Activated T-helper 1 cell treated with anti-CD3 and anti-CD28 coated beads, Interleukin-12 subunit alpha, Interleukin-12 subunit beta, Interleukin-2, Interleukin-4 antibody, amounts not matched to agents 30 ng/mL and 10 ng/mL and 1 ng/mL, durations not matched to agents 14 hours and 24 hours and 36 hours (primary cell): ENCODE measurements at regions of chr4 and their contacts with region 1.

Region 1: GRCh38 chr4:74228691-74229640 is 71.0 kb downstream of the MTHFD2L start:
- DNase-seq: peak; percentile 47
- H3K4me3 Mint-ChIP-seq: no peak overlapping the region
- H3K27ac Mint-ChIP-seq: no peak overlapping the region
- H3K4me1 Mint-ChIP-seq: peaks cover 20% of the 10 kb centered on the region
- H3K27me3 Mint-ChIP-seq: peaks cover 4% of the 10 kb centered on the region

Region 2: GRCh38 chr4:74189331-74190043 is 39.5 kb before region 1 on chr4:
- intact Hi-C with region 1: loop called (anchors 2 kb)
- DNase-seq: no peak
- H3K4me3 Mint-ChIP-seq: no peak overlapping the region
- H3K27ac Mint-ChIP-seq: no peak overlapping the region
- H3K4me1 Mint-ChIP-seq: no peaks in the 10 kb centered on the region
- H3K27me3 Mint-ChIP-seq: peaks cover 2% of the 10 kb centered on the region

Region 3: DNA sequence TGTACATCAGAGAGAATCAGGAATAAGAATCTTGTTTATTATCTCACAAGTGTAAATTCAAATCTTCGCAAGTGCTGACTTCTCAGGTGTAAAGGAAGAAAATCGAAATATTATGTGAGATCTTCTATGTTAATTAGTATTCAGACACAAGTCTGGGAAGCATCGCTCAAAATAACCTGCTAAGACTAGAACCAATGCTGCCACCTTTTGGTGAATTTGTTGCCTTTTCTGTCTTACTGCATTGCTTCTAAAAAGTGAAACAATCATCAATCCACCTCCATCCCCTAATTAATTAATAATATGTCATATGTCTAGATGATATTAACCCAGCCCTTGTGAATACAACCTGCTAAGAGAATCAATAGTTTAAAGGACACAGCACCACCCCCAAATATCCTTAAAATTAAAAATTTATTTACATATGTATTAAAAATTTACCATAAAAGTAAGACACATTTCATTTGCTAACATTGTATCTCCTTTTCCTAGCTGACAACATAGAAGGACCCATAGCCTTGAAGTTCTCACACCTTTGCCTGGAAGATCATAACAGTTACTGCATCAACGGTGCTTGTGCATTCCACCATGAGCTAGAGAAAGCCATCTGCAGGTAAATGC is 82.8 kb after region 1 on chr4:
- intact Hi-C with region 1: loop called (anchors 1 kb)
- DNase-seq: no peak
- H3K4me3 Mint-ChIP-seq: no peak overlapping the region
- H3K27ac Mint-ChIP-seq: no peak overlapping the region
- H3K4me1 Mint-ChIP-seq: peaks cover 6% of the 10 kb centered on the region
- H3K27me3 Mint-ChIP-seq: peaks cover 5% of the 10 kb centered on the region

Region 4: DNA sequence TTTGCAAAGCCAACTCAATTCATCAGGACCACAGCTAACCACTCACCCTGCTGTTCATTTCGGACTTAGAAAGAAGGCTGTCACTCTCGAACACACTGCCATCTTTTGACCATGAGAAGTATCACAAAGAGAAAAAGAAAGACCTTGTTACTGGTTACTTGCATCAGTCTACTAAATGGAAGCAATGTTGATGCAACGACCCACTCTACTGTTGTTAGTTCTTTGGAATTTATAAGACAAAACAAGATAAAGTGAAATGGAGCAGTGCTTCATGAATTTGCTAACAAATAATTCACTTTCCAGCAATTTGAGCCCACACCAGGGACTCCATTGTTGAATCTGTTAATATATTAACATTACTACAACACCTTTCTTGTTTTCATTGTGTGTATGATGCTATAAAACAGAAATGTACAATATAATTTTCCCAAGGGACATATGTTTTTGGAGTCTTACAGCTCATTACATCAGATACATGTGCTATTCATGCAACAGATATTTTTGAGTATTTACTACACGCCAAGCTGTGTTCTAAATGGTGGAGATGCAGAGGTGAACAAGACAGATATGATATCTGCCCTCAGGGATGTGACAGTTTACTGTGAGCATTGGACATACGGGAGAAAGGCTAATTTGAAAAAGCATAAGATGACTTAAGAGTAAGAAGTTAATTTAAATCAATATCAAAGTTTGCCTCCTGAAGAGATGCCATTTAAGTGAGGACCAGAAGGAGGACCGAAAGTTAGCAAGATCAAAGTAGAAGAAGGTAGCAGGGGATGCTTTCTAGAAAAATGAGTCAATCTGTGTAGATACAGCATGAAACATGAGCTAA is 303.2 kb after region 1 on chr4:
- intact Hi-C with region 1: loop called (anchors 5 kb)
- DNase-seq: no peak
- H3K4me3 Mint-ChIP-seq: no peak overlapping the region
- H3K27ac Mint-ChIP-seq: no peak overlapping the region
- H3K4me1 Mint-ChIP-seq: no peaks in the 10 kb centered on the region
- H3K27me3 Mint-ChIP-seq: peaks cover under 1% of the 10 kb centered on the region